ENCODE measurements at regions of chr18 and their contacts with region 1.

Region 1: DNA sequence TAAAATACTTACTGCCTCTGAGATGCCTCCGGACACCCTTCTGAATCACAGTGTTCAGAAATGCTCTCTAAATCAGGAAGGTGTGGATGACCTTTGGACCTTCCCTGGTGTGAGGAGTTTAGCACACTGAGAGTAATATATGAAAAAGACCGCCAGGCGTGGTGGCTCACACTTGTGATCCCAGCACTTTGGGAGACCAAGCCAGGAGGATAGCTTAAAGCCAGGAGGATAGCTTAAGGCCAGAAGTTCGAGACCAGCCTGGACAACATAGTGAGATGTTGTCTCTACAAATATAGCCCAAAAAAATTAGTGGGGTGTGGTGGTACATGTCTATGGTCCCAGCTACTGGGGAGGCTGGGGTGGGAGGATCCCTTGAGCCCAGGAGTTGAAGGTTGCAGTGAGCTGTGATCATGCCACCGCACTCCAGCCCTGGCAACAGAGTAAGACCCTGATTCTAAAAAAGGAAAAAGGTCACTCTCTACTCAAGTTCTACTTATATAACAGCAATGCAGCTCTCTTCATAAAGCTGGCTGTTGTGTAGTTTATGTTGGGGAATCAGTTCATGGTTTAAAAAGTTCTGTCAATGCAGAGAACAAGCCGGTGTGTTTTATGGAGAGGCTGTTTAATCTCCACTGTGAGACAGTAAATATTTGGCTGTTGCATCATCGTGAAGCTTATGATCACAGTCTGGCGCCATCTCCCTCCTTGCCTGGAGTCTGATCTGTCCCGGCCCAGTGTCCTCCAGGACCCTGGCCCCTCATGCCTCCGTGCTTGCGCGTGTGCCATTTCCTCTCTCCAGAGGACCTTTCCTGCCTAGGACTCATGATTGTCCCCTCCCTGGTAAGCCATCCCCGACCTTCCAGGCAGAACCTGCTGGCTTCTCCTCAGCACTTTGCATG is 184.5 kb downstream of the FAM210A start:
- DNase-seq: peak; percentile 98
- ATAC-seq: peak; percentile 94
- H3K4me3 ChIP-seq: peak overlapping the region; percentile 43 to 73 (median 54)
- H3K27ac ChIP-seq: peak overlapping the region; percentile 86
- H3K4me1 ChIP-seq: peaks cover 88% of the 10 kb centered on the region
- H3K27me3 ChIP-seq: no peaks in the 10 kb centered on the region
- CTCF ChIP-seq: peak; percentile 26; the same call in 1 of the 2 replicates
- EP300 ChIP-seq: peak; percentile 88 to 97; a peak in 3 of 4 replicates
- POLR2A ChIP-seq: peak; percentile 46 to 51
- RAD21 ChIP-seq: no peak

Region 2: DNA sequence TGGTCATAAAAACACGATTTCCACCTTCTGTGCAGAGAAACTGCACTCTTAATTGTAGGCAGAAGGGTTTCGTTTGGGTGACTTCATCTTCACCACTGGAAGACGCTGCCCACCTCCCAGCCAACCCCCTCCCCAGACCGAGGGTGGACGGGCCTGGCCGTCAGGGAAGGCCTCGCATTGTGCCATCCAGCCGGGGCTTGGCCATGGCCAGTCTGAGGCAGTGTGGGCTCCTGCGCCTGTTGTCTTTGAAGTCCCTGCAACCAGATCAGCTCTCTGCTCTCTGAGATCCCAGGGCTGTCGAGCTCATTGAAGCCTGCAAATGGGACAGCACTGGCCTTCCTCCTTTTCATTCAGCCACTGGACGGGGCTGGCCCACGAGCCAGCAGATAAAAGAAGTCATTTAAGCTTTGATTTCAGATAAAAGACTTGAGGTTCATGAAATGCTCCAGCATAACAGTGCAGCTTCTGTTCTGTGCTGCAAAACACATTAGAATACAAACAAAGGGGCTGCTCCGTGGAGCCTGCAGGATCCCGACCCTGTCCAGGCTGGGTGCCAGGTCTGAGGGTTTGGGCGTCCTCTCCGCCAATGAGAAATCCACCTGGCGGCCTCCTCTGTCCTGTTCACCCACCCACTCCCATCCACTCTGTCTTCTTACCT is 69.8 kb before region 1 on chr18:
- CTCF ChIA-PET with region 1: no interaction called
- POLR2A ChIA-PET with region 1: no interaction called
- in situ Hi-C with region 1: no loop called
- intact Hi-C with region 1: loop called (anchors 5 kb)
- DNase-seq: peak; percentile 86
- ATAC-seq: peak; percentile 89
- H3K4me3 ChIP-seq: peak overlapping the region; percentile 10 to 65 (median 39); a peak in 5 of 6 replicates
- H3K27ac ChIP-seq: peak overlapping the region; percentile 64
- H3K4me1 ChIP-seq: peaks cover 58% of the 10 kb centered on the region
- H3K27me3 ChIP-seq: no peaks in the 10 kb centered on the region
- CTCF ChIP-seq: no peak
- EP300 ChIP-seq: peak in 1 of 2 experiments; percentile 18; a peak in 1 of 4 replicates
- POLR2A ChIP-seq: no peak; a peak in 1 of 4 replicates
- RAD21 ChIP-seq: no peak

Region 3: GRCh38 chr18:13513021-13513420 is 28.8 kb before region 1 on chr18:
- CTCF ChIA-PET with region 1: no interaction called
- POLR2A ChIA-PET with region 1: no interaction called
- in situ Hi-C with region 1: no loop called
- intact Hi-C with region 1: loop called (anchors 2 kb)
- DNase-seq: peak; percentile 54
- ATAC-seq: peak; percentile 100
- H3K4me3 ChIP-seq: no peak overlapping the region
- H3K27ac ChIP-seq: peak overlapping the region; percentile 11
- H3K4me1 ChIP-seq: peaks cover 34% of the 10 kb centered on the region
- H3K27me3 ChIP-seq: no peaks in the 10 kb centered on the region
- CTCF ChIP-seq: no peak
- EP300 ChIP-seq: no peak
- POLR2A ChIP-seq: no peak
- RAD21 ChIP-seq: no peak

Region 4: GRCh38 chr18:13775058-13775457 is 233.2 kb after region 1 on chr18:
- CTCF ChIA-PET with region 1: no interaction called
- POLR2A ChIA-PET with region 1: no interaction called
- in situ Hi-C with region 1: no loop called
- intact Hi-C with region 1: no loop called
- DNase-seq: no peak
- ATAC-seq: no peak
- H3K4me3 ChIP-seq: no peak overlapping the region
- H3K27ac ChIP-seq: no peak overlapping the region
- H3K4me1 ChIP-seq: no peaks in the 10 kb centered on the region
- H3K27me3 ChIP-seq: no peaks in the 10 kb centered on the region
- CTCF ChIP-seq: no peak
- EP300 ChIP-seq: no peak
- POLR2A ChIP-seq: no peak
- RAD21 ChIP-seq: no peak

Measured in HepG2 (cell line).